ENCODE measurements at regions of chr7 and their contacts with region 1.

Region 1: DNA sequence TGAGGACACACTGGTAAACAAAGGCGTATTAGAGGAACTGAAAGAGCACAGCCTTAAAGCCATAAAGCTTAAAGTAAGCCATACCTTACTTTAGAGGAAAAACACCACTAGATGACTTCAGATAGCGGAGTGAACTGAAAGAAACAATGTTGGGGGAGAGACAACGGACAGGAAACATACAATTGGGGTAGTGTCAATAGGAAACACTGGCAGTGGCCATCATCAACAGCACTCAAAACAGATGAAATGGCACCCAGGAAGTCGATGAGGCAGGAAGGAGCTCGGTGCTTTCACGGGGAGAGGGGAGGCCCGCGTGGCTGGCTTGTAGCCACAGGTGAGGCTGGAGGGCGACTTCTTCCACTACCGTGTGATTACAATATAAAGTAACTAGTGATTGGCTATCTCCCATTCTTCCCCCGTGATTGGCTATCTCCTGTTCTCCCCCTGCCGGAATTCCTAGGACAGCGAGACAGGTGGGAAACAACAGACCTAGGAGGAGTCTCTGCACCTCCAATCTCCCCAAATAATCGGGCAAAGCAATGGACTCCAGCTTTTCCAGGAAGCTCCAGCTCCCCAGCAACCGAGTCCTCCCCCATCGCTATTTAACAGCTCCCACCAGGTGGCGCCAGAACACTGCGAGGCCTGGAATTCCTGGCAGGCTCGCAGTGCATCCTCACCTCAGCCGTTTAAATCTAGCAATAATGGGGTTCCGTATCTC is 2.4 kb upstream of the TAS2R38 start:
- DNase-seq: peak; percentile 90
- H3K4me3 ChIP-seq: peak overlapping the region; percentile 27
- H3K27ac ChIP-seq: no peak overlapping the region
- H3K4me1 ChIP-seq: no peaks in the 10 kb centered on the region
- H3K27me3 ChIP-seq: no peaks in the 10 kb centered on the region
- CTCF ChIP-seq: peak; percentile 90

Region 2: GRCh38 chr7:141617280-141617679 is 358.7 kb before region 1 on chr7:
- intact Hi-C with region 1: no loop called
- DNase-seq: no peak
- H3K4me3 ChIP-seq: no peak overlapping the region
- H3K27ac ChIP-seq: no peak overlapping the region
- H3K4me1 ChIP-seq: no peaks in the 10 kb centered on the region
- H3K27me3 ChIP-seq: no peaks in the 10 kb centered on the region
- CTCF ChIP-seq: no peak

Region 3: GRCh38 chr7:141864775-141865447 is 111.1 kb before region 1 on chr7:
- intact Hi-C with region 1: no loop called
- DNase-seq: no peak
- H3K4me3 ChIP-seq: no peak overlapping the region
- H3K27ac ChIP-seq: no peak overlapping the region
- H3K4me1 ChIP-seq: no peaks in the 10 kb centered on the region
- H3K27me3 ChIP-seq: no peaks in the 10 kb centered on the region
- CTCF ChIP-seq: no peak

Region 4: GRCh38 chr7:142025896-142026295 is 49.9 kb after region 1 on chr7:
- intact Hi-C with region 1: loop called (anchors 5 kb)
- DNase-seq: no peak
- H3K4me3 ChIP-seq: no peak overlapping the region
- H3K27ac ChIP-seq: no peak overlapping the region
- H3K4me1 ChIP-seq: no peaks in the 10 kb centered on the region
- H3K27me3 ChIP-seq: no peaks in the 10 kb centered on the region
- CTCF ChIP-seq: no peak

Region 5: GRCh38 chr7:142036384-142036783 is 60.4 kb after region 1 on chr7:
- intact Hi-C with region 1: no loop called
- DNase-seq: no peak
- H3K4me3 ChIP-seq: no peak overlapping the region
- H3K27ac ChIP-seq: peak overlapping the region; percentile 23
- H3K4me1 ChIP-seq: no peaks in the 10 kb centered on the region
- H3K27me3 ChIP-seq: no peaks in the 10 kb centered on the region
- CTCF ChIP-seq: no peak

Region 6: DNA sequence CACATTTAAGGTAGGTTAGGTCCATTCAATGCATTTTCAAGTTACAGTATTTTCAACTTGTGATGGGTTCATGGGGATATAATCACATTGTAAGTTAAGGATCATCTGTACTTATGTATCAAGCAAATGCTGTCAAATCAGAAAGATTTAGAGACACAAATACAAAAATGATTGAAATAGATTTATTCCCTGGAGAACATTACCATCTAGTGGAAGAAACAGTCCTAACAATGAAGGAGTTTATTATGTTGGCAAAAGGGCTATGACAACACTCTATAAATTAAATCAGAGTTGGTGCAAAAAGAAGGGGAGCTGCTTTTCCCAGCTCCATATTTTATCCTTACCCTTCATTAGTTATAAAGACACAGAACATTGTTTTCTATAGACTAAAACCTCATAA is 212.9 kb after region 1 on chr7:
- intact Hi-C with region 1: loop called (anchors 2 kb)
- DNase-seq: no peak
- H3K4me3 ChIP-seq: no peak overlapping the region
- H3K27ac ChIP-seq: no peak overlapping the region
- H3K4me1 ChIP-seq: no peaks in the 10 kb centered on the region
- H3K27me3 ChIP-seq: no peaks in the 10 kb centered on the region
- CTCF ChIP-seq: peak; percentile 20

Region 7: DNA sequence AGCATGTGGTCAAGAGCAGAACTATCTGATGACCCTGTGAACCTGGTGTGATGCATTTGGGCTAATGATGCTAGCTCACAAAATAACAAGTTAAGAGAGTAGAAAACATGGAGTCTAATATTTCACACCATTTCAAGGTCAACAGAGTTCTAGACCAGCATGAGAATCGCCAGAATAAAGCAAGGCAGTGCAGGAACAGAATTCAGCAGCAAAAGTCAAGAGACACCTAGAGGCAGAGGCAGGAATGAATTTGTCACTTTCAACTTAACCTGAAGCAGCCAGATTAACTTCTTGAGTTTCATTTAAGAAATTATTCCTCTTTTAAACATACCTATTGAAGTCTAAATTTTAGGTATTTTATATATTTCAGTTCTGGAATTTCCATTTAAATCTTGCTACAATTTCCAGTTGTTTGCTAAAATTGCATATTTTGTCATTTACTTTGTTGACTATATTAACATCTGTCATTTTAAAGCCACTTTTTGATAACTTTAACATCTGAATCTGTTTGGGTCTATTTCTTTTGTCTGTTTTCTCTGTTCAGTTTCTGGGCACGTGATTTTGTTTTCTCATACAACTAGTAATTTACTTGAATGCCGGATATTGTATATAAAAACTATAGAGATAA is 326.1 kb after region 1 on chr7:
- intact Hi-C with region 1: loop called (anchors 5 kb)
- DNase-seq: no peak
- H3K4me3 ChIP-seq: no peak overlapping the region
- H3K27ac ChIP-seq: no peak overlapping the region
- H3K4me1 ChIP-seq: no peaks in the 10 kb centered on the region
- H3K27me3 ChIP-seq: no peaks in the 10 kb centered on the region
- CTCF ChIP-seq: peak; percentile 31